ENCODE measurements at regions of chr16 and their contacts with region 1.

Region 1: DNA sequence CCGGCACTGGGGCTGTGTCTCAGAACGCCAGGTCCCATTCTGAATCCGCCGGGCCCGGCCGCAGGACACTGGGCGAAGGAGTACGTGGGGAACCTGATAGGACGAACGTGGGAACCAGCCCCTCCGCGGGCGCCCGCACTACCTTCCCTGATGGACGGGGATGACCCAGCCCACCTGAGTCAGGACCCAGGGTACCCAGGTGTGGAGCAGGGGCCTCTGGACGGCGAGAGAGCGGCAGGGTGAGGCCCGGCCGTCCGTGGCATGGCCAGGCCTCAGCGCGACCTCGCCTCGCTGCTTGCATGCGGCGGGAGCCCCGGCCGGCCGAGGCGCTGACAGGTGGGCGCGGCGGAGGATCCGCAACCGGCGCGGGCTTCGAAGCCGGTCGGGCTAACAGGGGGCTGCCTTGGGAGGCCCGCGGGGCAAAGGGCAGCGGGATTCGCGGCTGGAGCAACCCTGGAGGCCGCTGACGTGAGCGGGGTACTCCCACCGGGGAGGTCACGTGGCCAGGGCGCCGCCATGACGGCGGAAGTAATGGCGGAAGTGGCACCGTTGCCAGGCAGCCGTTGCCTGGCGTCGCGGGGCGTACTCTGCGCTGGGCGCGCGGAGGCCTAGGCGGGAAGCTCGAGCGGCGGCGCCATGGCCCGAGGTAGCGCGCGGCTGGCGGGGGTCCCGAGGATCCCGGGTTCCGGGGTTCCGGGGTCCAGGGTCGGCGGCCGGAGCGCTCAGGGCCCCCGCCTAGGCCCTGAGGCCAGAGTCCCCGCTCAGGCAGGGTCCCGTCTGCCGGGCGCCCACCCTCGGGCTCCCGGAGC is at the start of gene WDR90:
- DNase-seq: peak; percentile 88 to 93 (median 90)
- H3K4me3 ChIP-seq: peak within 1 kb of the TSS; percentile 3 to 53
- H3K4me3 Mint-ChIP-seq: peak within 1 kb of the TSS; percentile 60 to 82 (median 76)
- H3K27ac ChIP-seq: peak within 1 kb of the TSS; percentile 79
- H3K27ac Mint-ChIP-seq: peak within 1 kb of the TSS; percentile 68 to 92 (median 87)
- H3K4me1 ChIP-seq: peaks cover 14% of the 10 kb centered on the region
- H3K4me1 Mint-ChIP-seq: peaks cover 0 to 30% (median 8%) of the 10 kb centered on the region in 4 donors
- H3K27me3 ChIP-seq: no peaks in the 10 kb centered on the region
- H3K27me3 Mint-ChIP-seq: no peaks in the 10 kb centered on the region
- total RNA-seq, gene WDR90: 18.0 to 19.7 TPM

Region 2: GRCh38 chr16:636206-637080 is 12.5 kb before region 1 on chr16 and contains the start of gene METTL26:
- CTCF ChIA-PET with region 1: interaction called, 8 read pairs
- POLR2A ChIA-PET with region 1: interaction called, 23 read pairs
- intact Hi-C with region 1: loop called (anchors 1 kb)
- DNase-seq: peak; percentile 92 to 95 (median 93)
- H3K4me3 ChIP-seq: peak within 1 kb of the TSS; percentile 81 to 86
- H3K4me3 Mint-ChIP-seq: peak within 1 kb of the TSS; percentile 95 to 100 (median 98)
- H3K27ac ChIP-seq: peak within 1 kb of the TSS; percentile 76
- H3K27ac Mint-ChIP-seq: peak within 1 kb of the TSS; percentile 94 to 100 (median 99)
- H3K4me1 ChIP-seq: peaks cover 21% of the 10 kb centered on the region
- H3K4me1 Mint-ChIP-seq: peaks cover 0 to 10% (median 5%) of the 10 kb centered on the region in 4 donors
- H3K27me3 ChIP-seq: no peaks in the 10 kb centered on the region
- H3K27me3 Mint-ChIP-seq: peaks cover 0 to 3% of the 10 kb centered on the region in 2 donors
- total RNA-seq, gene METTL26: 68.4 to 74.1 TPM

Region 3: GRCh38 chr16:660459-661183 is 11.6 kb after region 1 on chr16:
- CTCF ChIA-PET with region 1: no interaction called
- POLR2A ChIA-PET with region 1: interaction called, 12 read pairs
- intact Hi-C with region 1: no loop called
- DNase-seq: peak; percentile 41 to 62 (median 59)
- H3K4me3 ChIP-seq: no peak overlapping the region
- H3K4me3 Mint-ChIP-seq: no peak overlapping the region
- H3K27ac ChIP-seq: no peak overlapping the region
- H3K27ac Mint-ChIP-seq: peak overlapping the region in 1 of 7 donors; percentile 51
- H3K4me1 ChIP-seq: no peaks in the 10 kb centered on the region
- H3K4me1 Mint-ChIP-seq: peaks cover 0 to 9% (median under 1%) of the 10 kb centered on the region in 4 donors
- H3K27me3 ChIP-seq: no peaks in the 10 kb centered on the region
- H3K27me3 Mint-ChIP-seq: no peaks in the 10 kb centered on the region

Region 4: DNA sequence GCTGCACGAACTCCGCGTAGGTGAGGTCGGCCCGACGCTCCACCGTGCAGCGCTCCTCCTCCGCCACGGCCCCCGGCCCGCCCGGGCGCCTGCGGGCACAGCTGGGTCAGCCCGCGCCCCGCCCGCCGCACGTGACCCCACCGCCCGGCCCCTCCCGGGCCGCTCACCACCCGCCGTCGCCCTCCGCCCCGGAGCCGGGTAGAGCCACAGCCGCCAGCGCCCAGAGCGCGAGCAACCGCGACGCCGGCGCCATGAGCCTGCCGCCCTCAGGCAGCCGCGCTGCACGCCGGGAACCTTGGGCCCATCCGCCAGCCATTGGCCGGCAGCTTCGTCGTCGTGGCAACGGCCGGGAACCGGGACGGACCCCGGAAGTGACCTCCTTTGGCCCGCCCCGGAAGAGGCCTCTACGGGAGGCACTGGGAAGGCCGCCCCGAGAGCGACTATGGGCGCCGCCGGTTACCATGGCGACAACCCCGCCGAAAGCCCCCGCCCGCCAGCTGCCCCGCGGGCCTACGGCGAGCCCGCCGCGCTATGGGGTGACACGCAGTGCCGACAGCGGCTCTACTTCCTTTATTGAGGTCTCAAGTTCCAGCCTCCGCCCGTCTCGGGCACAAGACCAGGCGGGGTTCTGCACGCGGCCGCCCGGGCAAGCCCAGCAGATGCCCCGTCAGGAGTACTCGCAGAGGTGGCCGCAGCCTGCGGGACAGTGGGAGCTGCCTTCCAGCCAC is 35.2 kb after region 1 on chr16 and contains the start of gene JMJD8:
- CTCF ChIA-PET with region 1: no interaction called
- POLR2A ChIA-PET with region 1: interaction called, 8 read pairs
- intact Hi-C with region 1: loop called (anchors 2 kb)
- DNase-seq: peak; percentile 93 to 96 (median 94)
- H3K4me3 ChIP-seq: peak within 1 kb of the TSS in 1 of 2 donors; percentile 62
- H3K4me3 Mint-ChIP-seq: peak within 1 kb of the TSS; percentile 66 to 86 (median 77)
- H3K27ac ChIP-seq: peak within 1 kb of the TSS; percentile 70
- H3K27ac Mint-ChIP-seq: peak within 1 kb of the TSS; percentile 42 to 91 (median 85)
- H3K4me1 ChIP-seq: peaks cover 58% of the 10 kb centered on the region
- H3K4me1 Mint-ChIP-seq: peaks cover 6 to 44% (median 27%) of the 10 kb centered on the region in 4 donors
- H3K27me3 ChIP-seq: no peaks in the 10 kb centered on the region
- H3K27me3 Mint-ChIP-seq: no peaks in the 10 kb centered on the region
- total RNA-seq, gene JMJD8: 45.0 to 49.0 TPM

Measured in CD4-positive, alpha-beta memory T cell (primary cell).